Panc1 (cell line): ENCODE measurements at regions of chr7 and their contacts with region 1.

Region 1: GRCh38 chr7:19121977-19122588 is 4.6 kb upstream of the TWIST1 start:
- DNase-seq: peak; percentile 22
- ATAC-seq: no peak
- H3K4me3 ChIP-seq: no peak overlapping the region
- H3K27ac ChIP-seq: no peak overlapping the region; the same call in 1 of the 2 replicates
- H3K4me1 ChIP-seq: no peaks in the 10 kb centered on the region
- H3K27me3 ChIP-seq: no peaks in the 10 kb centered on the region
- CTCF ChIP-seq: peak; percentile 89; the same call in 1 of the 2 replicates

Region 2: DNA sequence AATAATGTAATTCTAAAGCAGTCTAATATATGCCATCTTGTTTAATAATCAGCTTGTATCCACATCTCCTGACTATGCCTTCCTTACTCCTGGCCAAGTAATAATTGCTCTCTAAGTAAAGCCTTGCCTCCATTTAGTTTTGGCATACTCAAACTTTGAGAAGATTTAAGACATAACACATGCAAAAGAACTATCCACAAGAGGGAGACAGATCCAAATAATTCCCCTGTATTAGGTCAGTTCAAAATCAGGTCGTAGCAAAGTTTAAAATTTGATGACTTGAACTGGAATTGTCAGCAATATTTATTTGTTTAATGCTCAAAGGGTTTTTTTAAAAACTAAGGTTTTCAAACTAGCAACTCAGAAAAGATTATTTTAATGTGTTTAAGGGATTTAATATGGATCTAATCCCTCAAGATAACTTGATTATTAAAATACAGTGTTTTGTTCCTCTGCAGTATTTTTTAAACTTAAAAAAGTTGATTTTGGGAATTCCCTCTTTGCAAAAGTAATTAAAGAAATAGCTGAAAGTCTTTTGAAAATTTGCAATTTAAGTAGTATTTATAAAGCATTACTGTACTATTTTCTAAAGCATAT is 531.2 kb before region 1 on chr7:
- CTCF ChIA-PET with region 1: interaction called, 5 read pairs
- POLR2A ChIA-PET with region 1: no interaction called
- in situ Hi-C with region 1: no loop called
- intact Hi-C with region 1: loop called (anchors 5 kb)
- DNase-seq: peak; percentile 45
- ATAC-seq: peak; percentile 87
- H3K4me3 ChIP-seq: no peak overlapping the region
- H3K27ac ChIP-seq: no peak overlapping the region; the same call in 1 of the 2 replicates
- H3K4me1 ChIP-seq: no peaks in the 10 kb centered on the region
- H3K27me3 ChIP-seq: no peaks in the 10 kb centered on the region
- CTCF ChIP-seq: peak; percentile 78; the same call in 1 of the 2 replicates

Region 3: GRCh38 chr7:18803923-18804322 is 318.2 kb before region 1 on chr7:
- CTCF ChIA-PET with region 1: no interaction called
- POLR2A ChIA-PET with region 1: interaction called, 14 read pairs
- in situ Hi-C with region 1: no loop called
- intact Hi-C with region 1: no loop called
- DNase-seq: no peak
- ATAC-seq: no peak
- H3K4me3 ChIP-seq: no peak overlapping the region
- H3K27ac ChIP-seq: no peak overlapping the region
- H3K4me1 ChIP-seq: no peaks in the 10 kb centered on the region
- H3K27me3 ChIP-seq: no peaks in the 10 kb centered on the region
- CTCF ChIP-seq: no peak

Region 4: GRCh38 chr7:19665399-19666008 is 543.4 kb after region 1 on chr7:
- CTCF ChIA-PET with region 1: interaction called, 7 read pairs
- POLR2A ChIA-PET with region 1: interaction called, 4 read pairs
- in situ Hi-C with region 1: no loop called
- intact Hi-C with region 1: loop called (anchors 1 kb)
- DNase-seq: no peak
- ATAC-seq: peak; percentile 72
- H3K4me3 ChIP-seq: no peak overlapping the region
- H3K27ac ChIP-seq: peak overlapping the region; percentile 74; the same call in 1 of the 2 replicates
- H3K4me1 ChIP-seq: peaks cover 17% of the 10 kb centered on the region
- H3K27me3 ChIP-seq: no peaks in the 10 kb centered on the region
- CTCF ChIP-seq: peak; percentile 72; the same call in 1 of the 2 replicates